ENCODE measurements at regions of chr12 and their contacts with region 1.

Region 1: DNA sequence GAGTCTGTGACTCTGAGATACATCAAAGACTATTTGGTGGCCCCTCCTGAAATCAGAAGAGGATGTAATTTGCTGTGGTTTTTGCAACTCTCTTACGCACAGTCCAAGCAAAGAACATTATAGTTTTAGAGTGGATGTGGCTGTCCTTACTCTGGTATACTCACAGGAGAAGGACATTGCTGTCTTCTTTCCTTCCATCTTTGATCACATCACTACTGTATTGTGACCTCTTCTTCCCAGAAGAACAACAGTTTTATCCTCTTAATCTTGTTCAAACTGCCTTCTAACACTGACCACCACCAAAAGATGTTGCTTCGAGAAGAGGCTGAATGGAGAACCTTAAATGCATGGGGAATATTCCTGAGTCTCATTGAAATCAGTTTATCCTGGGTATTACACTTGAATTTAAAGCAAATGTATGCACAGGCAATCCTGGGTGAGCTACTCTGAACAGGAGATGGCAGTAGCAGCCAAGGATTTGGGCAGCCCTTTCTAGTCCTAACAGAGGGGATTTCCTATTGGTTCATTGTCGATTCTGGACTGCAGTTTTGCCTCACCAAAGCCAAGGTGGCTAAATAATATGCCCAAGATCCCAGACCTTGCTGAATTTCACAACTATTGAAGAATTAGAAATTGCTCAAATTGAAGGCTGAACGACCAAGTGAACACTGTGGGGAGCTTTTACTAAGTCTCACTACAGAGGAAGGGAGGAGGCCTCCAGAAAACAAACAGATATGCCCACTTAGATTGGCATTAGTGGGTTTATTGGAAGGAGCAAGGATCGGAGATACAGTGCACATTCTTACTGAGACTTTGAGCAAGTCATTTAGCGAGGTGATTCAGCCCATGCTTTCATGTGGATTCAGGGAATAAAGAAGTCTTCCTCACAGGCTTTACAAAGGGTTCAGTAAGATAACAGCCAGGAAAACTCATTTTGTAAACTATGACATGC is 282.8 kb downstream of the PAWR start:
- ATAC-seq: peak; percentile 49 to 100 (median 86)
- H3K4me3 ChIP-seq: no peak overlapping the region
- H3K27ac ChIP-seq: no peak overlapping the region
- H3K4me1 ChIP-seq: peaks cover 0 to 9% of the 10 kb centered on the region in 2 donors

Region 2: DNA sequence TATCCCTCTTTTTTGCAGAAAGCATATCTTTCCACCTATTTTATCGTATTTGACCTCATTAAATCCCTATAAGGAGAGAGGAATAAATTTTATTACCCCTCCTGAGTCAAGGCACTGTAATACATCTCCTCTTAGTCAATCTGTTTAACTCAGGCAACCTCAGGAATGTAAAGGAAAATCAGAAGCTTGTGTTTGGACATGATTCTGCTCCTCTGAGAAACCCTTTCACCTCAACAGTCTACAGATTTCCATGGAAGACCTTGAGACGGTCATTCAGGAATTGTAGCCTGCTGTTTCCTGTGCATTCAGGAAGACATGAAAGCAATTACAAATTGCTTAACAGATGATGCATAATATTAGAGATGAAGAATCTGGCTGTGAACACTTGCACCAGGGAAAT is 78.0 kb before region 1 on chr12:
- in situ Hi-C with region 1: no loop called
- ATAC-seq: no peak
- H3K4me3 ChIP-seq: no peak overlapping the region
- H3K27ac ChIP-seq: no peak overlapping the region
- H3K4me1 ChIP-seq: peaks cover 0 to 4% of the 10 kb centered on the region in 2 donors

Region 3: GRCh38 chr12:79451978-79452377 is 44.0 kb after region 1 on chr12:
- in situ Hi-C with region 1: no loop called
- ATAC-seq: peak in 6 of 8 experiments; percentile 22 to 94 (median 66)
- H3K4me3 ChIP-seq: no peak overlapping the region
- H3K27ac ChIP-seq: no peak overlapping the region
- H3K4me1 ChIP-seq: peaks cover 7 to 16% of the 10 kb centered on the region in 2 donors

Region 4: DNA sequence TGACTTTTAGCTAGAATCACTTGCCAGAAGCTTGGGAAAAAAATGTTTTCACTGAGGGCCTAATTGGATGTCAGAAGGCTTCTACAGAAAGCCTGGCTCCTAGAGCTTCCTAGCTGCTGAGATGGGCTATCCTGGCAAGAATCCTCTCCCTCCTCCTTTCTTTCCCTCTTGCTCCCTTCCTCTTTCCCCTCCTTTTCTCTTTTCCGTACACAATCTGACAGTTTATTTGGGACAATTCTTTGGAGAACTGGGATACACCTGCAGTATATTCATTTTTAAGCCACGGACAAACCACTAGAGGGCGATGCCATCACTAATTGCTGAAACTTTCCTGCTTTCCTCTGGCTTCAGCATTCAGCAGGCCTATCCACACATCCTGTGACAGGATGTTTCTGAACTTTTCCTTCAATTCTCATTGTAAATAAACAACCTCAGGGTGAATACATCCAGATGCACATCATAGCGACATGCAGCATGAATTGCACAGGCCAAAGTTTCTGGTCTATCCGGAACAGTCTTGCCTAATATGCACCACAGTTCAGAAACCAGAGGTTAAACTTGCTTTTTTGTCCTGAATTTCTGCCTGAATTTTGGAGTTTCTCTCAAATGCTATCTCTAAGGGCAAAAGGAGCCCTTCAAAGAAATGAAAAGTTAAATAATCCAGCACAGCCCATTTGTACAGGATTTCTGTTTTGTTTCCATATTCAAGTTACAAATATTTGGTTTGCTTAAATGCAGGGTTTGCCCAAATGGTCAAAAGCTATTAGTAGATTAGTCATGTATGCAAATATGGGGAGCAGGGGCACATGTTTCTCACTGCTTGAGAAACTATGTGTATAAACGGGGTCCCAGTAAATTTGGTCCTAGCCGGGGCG is 140.0 kb after region 1 on chr12:
- in situ Hi-C with region 1: loop called in 3 of 9 experiments (anchors 25 kb)
- ATAC-seq: peak in 5 of 8 experiments; percentile 44 to 89 (median 75)
- H3K4me3 ChIP-seq: no peak overlapping the region
- H3K27ac ChIP-seq: no peak overlapping the region
- H3K4me1 ChIP-seq: no peaks in the 10 kb centered on the region

Region 5: GRCh38 chr12:79737875-79738718 is 330.1 kb after region 1 on chr12:
- in situ Hi-C with region 1: loop called in 3 of 9 experiments (anchors 10 to 25 kb)
- ATAC-seq: peak in 4 of 8 experiments; percentile 48 to 68 (median 52)
- H3K4me3 ChIP-seq: no peak overlapping the region
- H3K27ac ChIP-seq: no peak overlapping the region
- H3K4me1 ChIP-seq: no peaks in the 10 kb centered on the region